ENCODE measurements at regions of chr22 and their contacts with region 1.

Region 1: DNA sequence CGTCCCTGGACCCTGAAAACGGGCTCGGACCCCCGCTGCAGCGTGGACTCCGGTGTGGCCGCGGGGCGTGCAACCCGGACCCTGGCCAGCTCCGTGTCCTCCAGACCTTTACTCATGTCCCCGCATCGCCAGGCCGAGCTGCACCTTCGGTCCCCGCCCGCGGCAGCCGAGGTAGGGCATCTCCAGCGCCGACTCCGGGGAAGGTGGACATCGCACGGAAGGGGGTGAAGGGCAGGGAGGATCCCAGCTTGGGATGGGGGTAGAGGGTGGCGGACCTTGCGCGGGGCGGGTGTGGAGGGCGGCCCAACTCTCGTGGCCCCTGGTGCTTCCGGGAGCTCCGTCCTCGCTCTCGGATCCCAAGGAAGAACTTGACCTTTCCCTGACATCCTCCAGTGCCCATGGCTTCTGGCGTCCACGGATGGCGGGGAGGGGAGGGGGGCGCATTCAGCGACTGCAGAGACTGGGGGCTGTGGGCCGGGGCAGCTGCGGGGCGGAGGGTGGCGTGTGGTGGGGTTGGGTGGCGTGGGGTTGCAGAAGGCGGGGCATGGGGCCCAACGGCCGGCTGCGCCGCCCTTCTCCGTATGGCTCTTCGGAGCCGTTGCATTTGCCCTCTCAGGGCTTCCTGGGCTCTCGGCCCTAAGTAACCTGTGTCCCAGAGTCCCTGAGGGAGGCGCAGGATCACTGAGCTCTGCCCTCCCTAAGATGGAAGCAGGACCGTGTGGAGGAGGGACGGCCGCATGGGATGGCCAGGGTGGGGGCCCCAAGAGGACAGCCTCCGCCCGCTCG is 9.5 kb upstream of the AIFM3 start:
- DNase-seq: no peak
- H3K4me3 ChIP-seq: peak overlapping the region; percentile 62
- CTCF ChIP-seq: no peak

Region 2: GRCh38 chr22:20937031-20937793 is 20.3 kb before region 1 on chr22:
- CTCF ChIA-PET with region 1: interaction called, 14 read pairs
- POLR2A ChIA-PET with region 1: no interaction called
- DNase-seq: no peak
- H3K4me3 ChIP-seq: no peak overlapping the region
- CTCF ChIP-seq: no peak

Region 3: DNA sequence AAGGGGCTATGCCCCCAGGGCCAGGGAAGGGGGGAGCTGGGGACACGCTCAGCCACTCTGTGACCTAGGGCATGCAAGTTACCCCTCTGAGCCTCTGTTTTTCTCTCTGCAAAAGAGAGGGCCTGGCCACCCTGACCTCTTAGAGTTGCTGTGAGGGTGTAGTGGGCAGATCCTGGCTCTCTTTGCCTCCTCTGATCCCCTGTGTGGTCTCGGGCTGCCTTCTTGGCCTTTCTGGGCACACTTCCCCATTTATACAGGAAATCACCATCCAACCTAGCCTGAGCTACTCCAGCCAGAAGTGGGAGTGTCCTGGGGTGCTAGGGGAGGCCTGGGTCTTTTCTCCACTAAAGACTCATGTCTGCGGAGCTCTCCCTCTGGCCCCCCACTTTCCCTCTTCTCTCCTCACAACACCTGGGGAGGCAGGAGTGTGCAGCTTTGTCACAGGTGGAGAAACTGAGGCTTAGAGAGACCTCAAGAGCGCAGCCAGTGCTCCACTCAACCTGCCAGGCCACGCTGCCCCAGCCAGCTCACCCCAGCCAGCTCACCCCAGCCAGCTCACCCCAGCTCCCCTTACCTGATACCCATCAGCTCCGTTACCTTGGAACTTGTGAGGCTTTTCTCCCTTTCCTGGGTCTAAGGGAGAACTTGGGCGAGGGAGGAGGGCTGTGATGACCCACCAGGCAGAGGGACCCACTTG is 10.9 kb after region 1 on chr22:
- CTCF ChIA-PET with region 1: interaction called, 80 read pairs
- POLR2A ChIA-PET with region 1: no interaction called
- DNase-seq: no peak
- H3K4me3 ChIP-seq: no peak overlapping the region
- CTCF ChIP-seq: no peak

Region 4: DNA sequence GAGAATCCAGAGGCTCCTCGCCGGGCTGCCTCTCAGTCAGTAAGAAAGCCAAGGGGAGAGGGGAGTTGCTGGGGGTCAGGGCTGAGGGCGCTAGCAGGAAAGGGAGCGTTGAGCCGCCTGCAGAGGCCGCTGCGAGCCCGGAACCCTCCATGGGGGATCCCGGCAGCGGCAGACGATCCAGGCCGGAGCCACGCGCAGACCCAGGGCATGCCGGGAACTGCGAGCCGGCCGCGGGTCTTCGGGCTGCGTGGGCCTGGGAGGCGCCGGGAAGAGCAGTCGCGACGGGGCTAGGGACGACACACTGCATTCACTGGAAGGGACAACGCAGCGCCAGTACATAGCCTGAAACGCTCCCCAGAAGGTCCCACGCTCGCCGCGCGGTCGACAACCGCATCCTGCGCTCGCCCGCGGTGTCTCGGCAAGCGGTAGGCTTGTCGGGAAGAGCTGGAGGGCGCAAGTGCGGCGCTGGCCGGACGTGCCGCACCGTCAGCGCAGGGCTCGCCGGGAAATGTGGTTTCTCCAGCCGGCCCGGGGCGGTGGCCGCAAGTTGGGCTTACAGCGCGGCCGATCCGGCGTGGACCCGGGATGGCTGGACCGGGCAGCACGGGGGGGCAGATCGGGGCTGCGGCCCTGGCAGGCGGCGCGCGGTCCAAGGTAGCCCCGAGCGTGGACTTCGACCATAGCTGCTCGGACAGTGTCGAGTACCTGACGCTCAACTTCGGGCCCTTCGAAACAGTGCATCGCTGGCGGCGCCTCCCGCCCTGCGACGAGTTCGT is 24.5 kb after region 1 on chr22 and contains the start of gene LZTR1:
- CTCF ChIA-PET with region 1: interaction called, 14 read pairs
- POLR2A ChIA-PET with region 1: interaction called, 5 read pairs
- DNase-seq: no peak
- H3K4me3 ChIP-seq: peak within 1 kb of the TSS; percentile 90
- CTCF ChIP-seq: peak; percentile 90

Measured in AG04449 (cell line).